Right ventricle myocardium superior (tissue), 1 donor: ENCODE measurements at regions of chr20 and their contacts with region 1.

Region 1: DNA sequence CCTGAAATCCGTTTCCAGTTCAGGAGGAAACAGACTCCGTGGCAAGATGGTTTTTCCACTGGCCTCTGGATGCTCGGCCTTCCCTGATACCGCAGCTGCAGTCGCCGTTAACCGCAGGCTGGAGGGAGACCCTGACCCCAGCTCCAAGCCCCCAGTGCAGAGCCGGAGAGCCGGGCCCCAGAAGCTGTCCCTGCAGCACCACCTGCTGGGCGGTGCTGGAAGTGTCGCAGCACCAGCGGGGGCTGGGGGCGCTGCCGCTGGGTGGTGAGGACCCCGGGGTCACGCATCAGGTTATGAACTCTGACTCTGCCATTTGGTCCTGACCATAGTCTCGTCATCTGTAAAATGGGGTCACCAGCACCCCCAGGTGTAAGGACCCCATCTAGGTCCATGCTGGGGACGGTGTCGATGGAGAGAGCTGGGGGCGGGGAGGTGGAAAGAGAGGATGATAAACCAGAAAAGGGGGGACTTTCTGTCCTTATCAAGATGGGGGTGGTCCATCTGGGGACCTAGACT is 20.7 kb upstream of the CHRNA4 start:
- DNase-seq: no peak
- ATAC-seq: peak; percentile 69

Region 2: GRCh38 chr20:63309261-63310071 is 72.4 kb before region 1 on chr20:
- intact Hi-C with region 1: loop called (anchors 1 kb)
- DNase-seq: peak; percentile 65
- ATAC-seq: peak; percentile 61

Region 3: GRCh38 chr20:63330940-63331339 is 50.9 kb before region 1 on chr20:
- intact Hi-C with region 1: no loop called
- DNase-seq: peak; percentile 26
- ATAC-seq: no peak